ENCODE measurements at regions of chr2 and their contacts with region 1.

Region 1: GRCh38 chr2:100562732-100563720 is at the start of gene PDCL3:
- DNase-seq: peak; percentile 94 to 98 (median 96)
- ATAC-seq: peak; percentile 95 to 98 (median 95)
- H3K4me3 ChIP-seq: peak within 1 kb of the TSS; percentile 68 to 87 (median 83)
- H3K27ac ChIP-seq: peak within 1 kb of the TSS; percentile 77 to 95 (median 91)
- H3K4me1 ChIP-seq: no peaks in the 10 kb centered on the region
- H3K27me3 ChIP-seq: no peaks in the 10 kb centered on the region
- CTCF ChIP-seq: no peak
- total RNA-seq, gene PDCL3: 4.9 to 8.5 (median 8.0) TPM

Region 2: DNA sequence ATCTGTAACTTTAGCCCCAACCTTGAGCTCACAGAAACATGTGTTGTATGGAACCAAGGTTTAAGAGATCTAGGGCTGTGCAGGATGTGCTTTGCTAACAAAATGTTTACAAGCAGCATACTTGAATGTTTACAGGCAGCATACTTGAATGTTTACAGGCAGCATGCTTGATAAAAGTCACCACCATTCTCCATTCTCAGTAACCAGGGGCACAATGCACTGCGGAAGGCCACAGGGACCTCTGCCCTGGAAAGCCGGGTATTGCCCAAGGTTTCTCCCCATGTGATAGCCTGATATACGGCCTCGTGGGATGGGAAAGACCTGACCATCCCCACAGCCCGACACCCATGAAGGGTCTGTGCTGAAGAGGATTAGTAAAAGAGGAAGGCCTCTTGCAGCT is 293.1 kb before region 1 on chr2:
- intact Hi-C with region 1: loop called in 1 of 3 experiments (anchors 5 kb)
- DNase-seq: no peak
- ATAC-seq: no peak
- H3K4me3 ChIP-seq: no peak overlapping the region
- H3K27ac ChIP-seq: no peak overlapping the region
- H3K4me1 ChIP-seq: no peaks in the 10 kb centered on the region
- H3K27me3 ChIP-seq: no peaks in the 10 kb centered on the region
- CTCF ChIP-seq: no peak

Measured in pancreas (tissue), 10 donors.